ENCODE measurements at regions of chr22 and their contacts with region 1.

Region 1: DNA sequence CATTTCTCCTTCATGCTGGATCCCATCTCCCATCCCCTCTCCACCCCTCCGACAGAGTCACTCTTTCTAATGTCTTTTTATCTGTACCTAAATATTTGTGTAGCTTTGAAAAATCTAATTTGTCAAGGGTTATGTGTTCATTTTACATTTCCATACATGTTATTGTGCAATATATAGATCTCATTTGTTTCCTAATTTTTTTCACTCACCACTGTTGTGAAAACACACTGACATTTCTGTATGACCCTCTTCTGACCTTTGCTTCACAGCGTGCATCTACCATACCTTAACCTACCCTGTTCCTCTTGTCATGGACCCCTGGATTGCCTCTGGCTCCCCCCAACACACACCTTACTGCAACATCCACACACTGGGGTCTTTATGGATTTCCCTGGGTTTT is 942.9 kb downstream of the TBC1D22A start:
- DNase-seq: no peak
- H3K4me3 Mint-ChIP-seq: no peak overlapping the region
- H3K27ac Mint-ChIP-seq: no peak overlapping the region
- H3K4me1 Mint-ChIP-seq: no peaks in the 10 kb centered on the region
- H3K27me3 Mint-ChIP-seq: no peaks in the 10 kb centered on the region

Region 2: GRCh38 chr22:47645450-47645914 is 59.9 kb before region 1 on chr22:
- intact Hi-C with region 1: loop called (anchors 10 kb)
- DNase-seq: no peak
- H3K4me3 Mint-ChIP-seq: no peak overlapping the region
- H3K27ac Mint-ChIP-seq: no peak overlapping the region
- H3K4me1 Mint-ChIP-seq: no peaks in the 10 kb centered on the region
- H3K27me3 Mint-ChIP-seq: no peaks in the 10 kb centered on the region

Measured in activated T-helper 1 cell treated with anti-CD3 and anti-CD28 coated beads, Interleukin-12 subunit alpha, Interleukin-12 subunit beta, Interleukin-2, Interleukin-4 antibody, amounts not matched to agents 30 ng/mL and 10 ng/mL and 1 ng/mL, durations not matched to agents 14 hours and 24 hours and 36 hours (primary cell).